Naive thymus-derived CD8-positive, alpha-beta T cell (primary cell): ENCODE measurements at regions of chr5 and their contacts with region 1.

Region 1: GRCh38 chr5:159951387-159951786 is 35.1 kb downstream of the ADRA1B start:
- DNase-seq: no peak
- ATAC-seq: no peak
- H3K4me3 Mint-ChIP-seq: no peak overlapping the region
- H3K27ac Mint-ChIP-seq: no peak overlapping the region
- H3K4me1 Mint-ChIP-seq: no peaks in the 10 kb centered on the region
- H3K27me3 Mint-ChIP-seq: peaks cover 0 to 24% (median 12%) of the 10 kb centered on the region in 5 donors

Region 2: GRCh38 chr5:160230686-160231527 is 279.5 kb after region 1 on chr5:
- POLR2A ChIA-PET with region 1: interaction called, 11 read pairs
- DNase-seq: no peak
- ATAC-seq: no peak
- H3K4me3 Mint-ChIP-seq: no peak overlapping the region
- H3K27ac Mint-ChIP-seq: no peak overlapping the region
- H3K4me1 Mint-ChIP-seq: peaks cover 0 to 4% (median under 1%) of the 10 kb centered on the region in 4 donors
- H3K27me3 Mint-ChIP-seq: no peaks in the 10 kb centered on the region